ENCODE measurements at regions of chr2 and their contacts with region 1.

Region 1: GRCh38 chr2:135004005-135004746 is 43.1 kb downstream of the MAP3K19 start:
- DNase-seq: peak; percentile 83
- H3K4me3 ChIP-seq: no peak overlapping the region
- H3K27ac ChIP-seq: no peak overlapping the region
- H3K4me1 ChIP-seq: no peaks in the 10 kb centered on the region
- H3K27me3 ChIP-seq: peaks cover 5% of the 10 kb centered on the region
- CTCF ChIP-seq: peak; percentile 97

Region 2: GRCh38 chr2:134943540-134943939 is 60.6 kb before region 1 on chr2:
- CTCF ChIA-PET with region 1: no interaction called
- POLR2A ChIA-PET with region 1: no interaction called
- intact Hi-C with region 1: no loop called
- DNase-seq: no peak
- H3K4me3 ChIP-seq: no peak overlapping the region
- H3K27ac ChIP-seq: no peak overlapping the region
- H3K4me1 ChIP-seq: peaks cover 6% of the 10 kb centered on the region
- H3K27me3 ChIP-seq: no peaks in the 10 kb centered on the region
- CTCF ChIP-seq: no peak

Region 3: GRCh38 chr2:135230150-135230549 is 226.0 kb after region 1 on chr2:
- CTCF ChIA-PET with region 1: no interaction called
- POLR2A ChIA-PET with region 1: no interaction called
- intact Hi-C with region 1: no loop called
- DNase-seq: no peak
- H3K4me3 ChIP-seq: no peak overlapping the region
- H3K27ac ChIP-seq: no peak overlapping the region
- H3K4me1 ChIP-seq: no peaks in the 10 kb centered on the region
- H3K27me3 ChIP-seq: no peaks in the 10 kb centered on the region
- CTCF ChIP-seq: no peak

Region 4: GRCh38 chr2:135265960-135266490 is 261.8 kb after region 1 on chr2:
- CTCF ChIA-PET with region 1: no interaction called
- POLR2A ChIA-PET with region 1: no interaction called
- intact Hi-C with region 1: loop called (anchors 10 kb)
- DNase-seq: no peak
- H3K4me3 ChIP-seq: no peak overlapping the region
- H3K27ac ChIP-seq: no peak overlapping the region
- H3K4me1 ChIP-seq: no peaks in the 10 kb centered on the region
- H3K27me3 ChIP-seq: no peaks in the 10 kb centered on the region
- CTCF ChIP-seq: no peak

Region 5: GRCh38 chr2:135473567-135473966 is 469.4 kb after region 1 on chr2:
- CTCF ChIA-PET with region 1: no interaction called
- POLR2A ChIA-PET with region 1: no interaction called
- intact Hi-C with region 1: loop called (anchors 10 kb)
- DNase-seq: peak; percentile 46
- H3K4me3 ChIP-seq: no peak overlapping the region
- H3K27ac ChIP-seq: no peak overlapping the region
- H3K4me1 ChIP-seq: no peaks in the 10 kb centered on the region
- H3K27me3 ChIP-seq: no peaks in the 10 kb centered on the region
- CTCF ChIP-seq: peak; percentile 54

Region 6: GRCh38 chr2:135600915-135601314 is 596.7 kb after region 1 on chr2:
- CTCF ChIA-PET with region 1: interaction called, 5 read pairs
- POLR2A ChIA-PET with region 1: interaction called, 3 read pairs
- intact Hi-C with region 1: loop called (anchors 5 kb)
- DNase-seq: peak; percentile 6
- H3K4me3 ChIP-seq: no peak overlapping the region
- H3K27ac ChIP-seq: no peak overlapping the region
- H3K4me1 ChIP-seq: peaks cover 5% of the 10 kb centered on the region
- H3K27me3 ChIP-seq: no peaks in the 10 kb centered on the region
- CTCF ChIP-seq: peak; percentile 41; the same call in 1 of the 2 replicates

Region 7: DNA sequence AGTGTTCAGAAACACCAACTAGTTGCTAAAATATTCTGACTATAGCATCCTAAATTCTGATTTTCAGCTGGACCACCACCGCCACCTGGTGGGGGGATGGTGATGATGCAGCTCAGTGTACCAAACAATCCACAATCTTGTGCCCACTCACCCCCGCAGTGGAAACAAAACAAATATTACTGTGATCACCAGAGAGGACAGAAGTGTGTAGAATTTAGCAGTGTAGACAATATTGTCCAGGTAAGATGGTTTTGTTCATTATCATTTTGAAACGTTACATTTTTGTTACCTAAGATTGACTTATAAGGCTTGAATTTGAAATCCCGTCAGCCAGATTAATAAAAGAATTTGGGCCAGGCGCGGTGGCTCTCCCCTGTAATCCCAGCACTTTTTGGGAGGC is 705.8 kb after region 1 on chr2:
- CTCF ChIA-PET with region 1: interaction called, 20 read pairs
- POLR2A ChIA-PET with region 1: no interaction called
- intact Hi-C with region 1: loop called (anchors 1 kb)
- DNase-seq: peak; percentile 63
- H3K4me3 ChIP-seq: no peak overlapping the region
- H3K27ac ChIP-seq: no peak overlapping the region
- H3K4me1 ChIP-seq: no peaks in the 10 kb centered on the region
- H3K27me3 ChIP-seq: no peaks in the 10 kb centered on the region
- CTCF ChIP-seq: peak; percentile 92

Region 8: DNA sequence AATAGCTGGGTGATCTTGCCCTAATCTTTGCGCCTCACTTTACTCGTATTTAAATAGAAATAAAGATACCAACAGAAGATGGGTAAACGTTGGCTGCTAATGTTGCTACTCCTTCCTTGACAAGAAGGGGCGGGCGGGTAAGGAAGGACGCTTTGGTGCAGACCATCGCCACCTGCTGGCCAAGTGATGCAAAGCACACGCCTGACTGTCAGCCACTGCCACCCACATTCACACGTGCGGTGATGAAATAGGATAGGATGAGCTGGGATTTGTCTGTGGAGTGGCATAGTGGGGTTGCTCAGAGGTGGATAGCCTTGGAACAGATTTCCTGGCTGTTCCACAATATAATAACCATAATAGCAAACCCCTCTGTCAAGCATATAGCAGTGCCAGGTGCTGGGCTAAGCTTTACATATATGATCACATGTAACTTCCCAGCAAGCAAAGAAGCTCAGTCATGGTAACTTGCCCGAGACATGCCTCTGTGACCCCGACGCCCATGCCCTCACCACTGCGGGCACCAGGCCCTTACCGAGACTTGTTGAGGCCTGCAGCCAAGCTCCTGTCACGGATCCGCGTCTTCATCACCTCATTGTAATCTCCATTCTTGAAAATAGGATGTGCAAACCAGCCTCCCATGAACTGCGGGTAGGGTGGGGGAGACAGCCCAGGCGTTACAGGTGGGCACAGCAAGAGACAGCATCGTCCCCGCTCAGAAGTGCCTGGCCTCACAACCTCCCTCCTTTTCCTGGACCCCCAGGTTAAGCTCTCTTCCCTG is 793.5 kb after region 1 on chr2:
- CTCF ChIA-PET with region 1: interaction called, 5 read pairs
- POLR2A ChIA-PET with region 1: no interaction called
- intact Hi-C with region 1: loop called (anchors 1 kb)
- DNase-seq: peak; percentile 87
- H3K4me3 ChIP-seq: no peak overlapping the region
- H3K27ac ChIP-seq: no peak overlapping the region
- H3K4me1 ChIP-seq: no peaks in the 10 kb centered on the region
- H3K27me3 ChIP-seq: no peaks in the 10 kb centered on the region
- CTCF ChIP-seq: peak; percentile 98

Region 9: GRCh38 chr2:136909777-136910176 is 1905.6 kb after region 1 on chr2:
- CTCF ChIA-PET with region 1: interaction called, 13 read pairs
- POLR2A ChIA-PET with region 1: no interaction called
- intact Hi-C with region 1: no loop called
- DNase-seq: no peak
- H3K4me3 ChIP-seq: no peak overlapping the region
- H3K27ac ChIP-seq: no peak overlapping the region
- H3K4me1 ChIP-seq: no peaks in the 10 kb centered on the region
- H3K27me3 ChIP-seq: no peaks in the 10 kb centered on the region
- CTCF ChIP-seq: no peak